ENCODE measurements at regions of chr5 and their contacts with region 1.

Region 1: DNA sequence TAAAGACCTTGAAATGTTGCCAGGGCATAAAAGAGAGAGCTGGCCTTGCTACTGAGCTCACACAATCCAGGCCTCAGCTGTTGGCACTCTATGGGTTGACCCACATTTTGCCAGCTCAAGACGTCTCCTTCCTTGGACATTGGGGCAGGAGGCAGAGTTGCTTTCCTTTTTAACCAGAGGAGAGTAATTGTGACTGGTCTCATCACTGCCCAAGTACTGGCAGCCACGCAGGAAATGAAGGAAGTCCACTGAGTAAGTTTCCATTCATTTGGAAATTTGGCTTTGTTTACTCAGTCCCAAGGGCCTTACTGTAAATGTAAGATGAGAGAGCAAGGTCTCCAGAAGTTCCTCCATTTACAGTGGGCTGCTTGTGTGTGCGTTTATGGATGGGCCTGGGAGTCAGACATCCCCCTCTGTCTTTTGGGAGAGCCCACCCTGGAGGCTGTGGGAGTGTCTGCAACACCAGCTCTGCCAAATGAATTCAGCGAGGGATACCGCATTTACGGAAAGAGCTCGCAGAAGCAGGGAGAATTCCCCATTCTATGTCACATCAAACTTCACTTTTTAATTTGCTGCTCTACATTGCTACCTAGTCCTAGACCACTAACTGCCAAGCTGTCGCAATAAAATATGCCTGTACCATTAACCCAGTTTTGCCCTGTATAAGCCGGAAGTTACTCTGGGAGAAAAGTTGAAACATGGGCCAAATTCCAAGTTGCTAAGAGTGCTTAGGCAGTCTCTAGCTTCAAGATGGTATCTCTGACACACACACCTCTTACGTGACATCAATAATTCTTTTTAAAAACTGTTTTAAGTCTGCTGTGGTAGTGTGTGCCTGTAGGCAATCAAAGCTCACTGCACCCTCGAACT is 24.5 kb upstream of the PDZD2 start:
- DNase-seq: peak; percentile 78 to 95 (median 91)
- H3K4me3 ChIP-seq: peak overlapping the region in 3 of 7 experiments; percentile 33 to 51 (median 46)
- H3K27ac ChIP-seq: peak overlapping the region in 1 of 2 experiments; percentile 63
- H3K4me1 ChIP-seq: peaks cover 0 to 31% (median 14%) of the 10 kb centered on the region in 4 experiments
- H3K27me3 ChIP-seq: no peaks in the 10 kb centered on the region

Region 2: GRCh38 chr5:31516802-31517201 is 97.6 kb before region 1 on chr5:
- CTCF ChIA-PET with region 1: no interaction called
- POLR2A ChIA-PET with region 1: no interaction called
- DNase-seq: peak in 2 of 3 donors; percentile 9 to 25
- H3K4me3 ChIP-seq: no peak overlapping the region
- H3K27ac ChIP-seq: peak overlapping the region in 1 of 2 experiments; percentile 36
- H3K4me1 ChIP-seq: peaks cover 0 to 9% (median 3%) of the 10 kb centered on the region in 4 experiments
- H3K27me3 ChIP-seq: no peaks in the 10 kb centered on the region

Region 3: DNA sequence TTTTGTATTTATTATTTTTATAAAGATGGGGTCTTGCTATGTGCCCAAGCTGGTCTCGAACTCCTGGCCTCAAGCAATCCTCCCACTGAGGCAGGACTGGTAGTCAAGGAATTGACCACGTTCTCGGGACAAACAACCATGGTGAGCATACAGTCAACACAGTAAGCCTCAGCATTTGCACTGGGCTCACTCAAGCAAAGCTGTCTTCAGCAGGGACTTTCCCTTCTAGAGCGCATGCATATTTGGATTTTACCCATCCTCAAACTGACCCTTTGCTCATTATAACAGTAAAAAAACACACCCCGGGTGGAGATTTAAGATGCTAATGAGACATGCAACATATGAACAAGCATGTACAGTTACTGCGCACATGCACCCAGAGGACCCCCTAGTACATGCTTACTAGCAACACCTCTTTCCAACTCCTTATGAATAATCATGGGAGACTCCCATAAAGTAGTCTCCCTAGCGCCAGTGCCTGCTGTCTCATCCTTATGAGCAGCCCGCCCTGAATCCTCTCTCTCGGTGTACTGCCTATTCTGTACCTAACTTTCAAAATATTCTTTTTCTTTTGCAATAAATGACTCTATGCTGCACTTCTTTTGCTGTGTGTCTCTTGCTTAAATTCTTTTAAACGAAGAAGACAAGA is 40.8 kb before region 1 on chr5:
- CTCF ChIA-PET with region 1: no interaction called
- POLR2A ChIA-PET with region 1: no interaction called
- DNase-seq: no peak
- H3K4me3 ChIP-seq: no peak overlapping the region
- H3K27ac ChIP-seq: no peak overlapping the region
- H3K4me1 ChIP-seq: peaks cover 0 to 2% (median under 1%) of the 10 kb centered on the region in 4 experiments
- H3K27me3 ChIP-seq: no peaks in the 10 kb centered on the region

Region 4: GRCh38 chr5:31598640-31599611 is 15.5 kb before region 1 on chr5:
- CTCF ChIA-PET with region 1: interaction called, 10 read pairs
- POLR2A ChIA-PET with region 1: no interaction called
- DNase-seq: peak in 2 of 3 donors; percentile 45 to 54
- H3K4me3 ChIP-seq: no peak overlapping the region
- H3K27ac ChIP-seq: no peak overlapping the region
- H3K4me1 ChIP-seq: peaks cover 0 to 8% (median 2%) of the 10 kb centered on the region in 4 experiments
- H3K27me3 ChIP-seq: no peaks in the 10 kb centered on the region

Region 5: DNA sequence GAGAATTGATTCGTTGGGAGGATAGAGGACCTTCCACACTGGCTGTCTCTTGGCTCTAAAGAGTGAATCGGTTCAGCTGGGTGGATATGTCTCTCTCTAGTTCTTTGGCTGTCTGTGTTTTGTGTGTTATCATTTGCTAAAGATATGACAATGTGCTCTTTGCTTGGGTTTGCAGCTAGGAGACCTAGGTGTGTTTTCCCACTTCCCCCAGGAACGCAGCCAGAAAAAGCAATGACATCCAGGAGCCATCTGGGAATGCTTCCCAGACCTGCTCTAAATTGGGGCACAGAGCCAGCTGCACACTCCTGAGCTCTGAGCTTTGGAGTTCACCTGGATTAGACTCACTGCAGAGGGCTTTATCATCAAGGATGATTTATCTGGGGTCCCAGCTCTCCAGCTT is 11.8 kb after region 1 on chr5:
- CTCF ChIA-PET with region 1: no interaction called
- POLR2A ChIA-PET with region 1: no interaction called
- DNase-seq: no peak
- H3K4me3 ChIP-seq: no peak overlapping the region
- H3K27ac ChIP-seq: no peak overlapping the region
- H3K4me1 ChIP-seq: peaks cover 0 to 2% (median 0%) of the 10 kb centered on the region in 4 experiments
- H3K27me3 ChIP-seq: peaks cover 0 to 4% (median 0%) of the 10 kb centered on the region in 5 experiments

Region 6: GRCh38 chr5:31741496-31741895 is 127.1 kb after region 1 on chr5:
- CTCF ChIA-PET with region 1: no interaction called
- POLR2A ChIA-PET with region 1: no interaction called
- DNase-seq: no peak
- H3K4me3 ChIP-seq: no peak overlapping the region
- H3K27ac ChIP-seq: no peak overlapping the region
- H3K4me1 ChIP-seq: no peaks in the 10 kb centered on the region
- H3K27me3 ChIP-seq: no peaks in the 10 kb centered on the region

Measured in common myeloid progenitor, CD34-positive (primary cell).